Naive thymus-derived CD4-positive, alpha-beta T cell (primary cell): ENCODE measurements at regions of chr6 and their contacts with region 1.

Region 1: DNA sequence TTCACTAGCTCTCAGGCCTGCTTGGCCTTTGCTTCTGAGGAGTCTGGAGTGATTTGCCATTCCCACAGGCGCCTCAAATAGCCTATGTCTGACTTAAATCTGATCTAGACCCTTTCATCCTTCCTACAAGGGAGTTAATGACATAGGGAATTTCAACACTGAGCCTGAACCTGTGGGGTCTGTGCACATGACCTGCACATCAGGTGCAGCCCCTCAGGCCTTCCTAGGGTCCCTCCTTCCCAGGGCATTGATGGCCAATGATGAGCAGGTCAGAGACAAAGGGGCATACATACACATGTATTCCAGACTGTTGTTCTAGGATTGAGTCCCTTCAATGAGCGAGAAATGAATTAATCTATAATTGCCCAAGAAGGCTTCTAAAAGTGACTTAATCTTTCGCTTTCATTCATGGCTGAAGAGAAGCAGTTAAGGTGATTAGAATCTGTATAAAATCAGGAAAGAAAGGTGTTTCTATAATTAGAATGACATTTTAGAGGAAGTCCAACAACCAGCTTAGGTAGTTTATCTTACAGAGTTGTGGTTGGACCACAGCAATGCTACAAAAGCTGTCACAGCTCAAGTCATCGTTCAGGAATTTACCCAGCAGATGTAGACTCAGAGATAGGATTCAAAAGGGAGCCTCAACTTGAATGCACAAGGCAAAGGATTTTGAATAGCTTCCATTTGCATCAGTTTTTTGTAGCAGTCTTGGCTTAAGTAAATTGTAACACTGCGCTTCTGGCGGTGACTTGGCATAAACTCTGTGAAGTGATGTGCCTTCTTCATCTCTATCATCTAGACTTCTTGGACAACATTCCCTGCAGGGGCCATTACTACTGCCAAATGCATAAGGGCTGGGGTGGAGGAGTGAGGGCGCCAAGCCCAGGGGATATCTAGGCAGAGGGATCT is 27.0 kb upstream of the TBC1D7 start:
- DNase-seq: peak in 8 of 9 donors; percentile 10 to 42 (median 30)
- ATAC-seq: peak; percentile 75
- H3K4me3 ChIP-seq: peak overlapping the region; percentile 22
- H3K4me3 Mint-ChIP-seq: peak overlapping the region; percentile 78 to 91 (median 80)
- H3K27ac ChIP-seq: peak overlapping the region; percentile 46
- H3K27ac Mint-ChIP-seq: peak overlapping the region; percentile 71 to 98 (median 85)
- H3K4me1 ChIP-seq: peaks cover 27 to 32% of the 10 kb centered on the region in 2 donors
- H3K4me1 Mint-ChIP-seq: peaks cover 33 to 56% (median 46%) of the 10 kb centered on the region in 7 donors
- H3K27me3 ChIP-seq: no peaks in the 10 kb centered on the region
- H3K27me3 Mint-ChIP-seq: no peaks in the 10 kb centered on the region

Region 2: DNA sequence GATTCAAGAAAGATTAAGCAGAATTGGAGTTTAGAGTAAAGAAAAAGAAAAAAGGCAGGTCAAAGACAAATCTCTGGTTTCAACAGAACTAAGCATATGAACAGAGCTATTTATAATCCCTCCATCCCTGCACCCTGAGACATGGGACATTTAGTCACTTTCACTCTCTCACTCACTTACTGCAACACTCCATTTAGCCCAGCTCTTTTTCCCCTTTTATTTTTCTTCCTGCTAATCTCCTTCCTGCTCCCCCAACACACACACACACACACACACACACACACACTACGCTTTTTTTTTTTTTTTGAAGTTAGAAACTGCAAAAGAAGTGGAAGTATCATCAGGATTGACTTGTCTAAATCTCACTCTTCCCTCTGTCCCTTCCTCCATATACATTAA is 18.2 kb after region 1 on chr6:
- CTCF ChIA-PET with region 1: no interaction called
- POLR2A ChIA-PET with region 1: no interaction called
- intact Hi-C with region 1: loop called in 1 of 2 experiments (anchors 1 kb)
- DNase-seq: no peak
- ATAC-seq: no peak
- H3K4me3 ChIP-seq: no peak overlapping the region
- H3K4me3 Mint-ChIP-seq: no peak overlapping the region
- H3K27ac ChIP-seq: no peak overlapping the region
- H3K27ac Mint-ChIP-seq: no peak overlapping the region
- H3K4me1 ChIP-seq: peaks cover 0 to 9% of the 10 kb centered on the region in 2 donors
- H3K4me1 Mint-ChIP-seq: peaks cover 0 to 24% (median 2%) of the 10 kb centered on the region in 7 donors
- H3K27me3 ChIP-seq: no peaks in the 10 kb centered on the region
- H3K27me3 Mint-ChIP-seq: no peaks in the 10 kb centered on the region

Region 3: GRCh38 chr6:13383328-13384163 is 28.2 kb after region 1 on chr6:
- CTCF ChIA-PET with region 1: no interaction called
- POLR2A ChIA-PET with region 1: no interaction called
- intact Hi-C with region 1: loop called in 1 of 2 experiments (anchors 2 kb)
- DNase-seq: no peak
- ATAC-seq: peak; percentile 93
- H3K4me3 ChIP-seq: no peak overlapping the region
- H3K4me3 Mint-ChIP-seq: peak overlapping the region in 1 of 10 donors; percentile 23
- H3K27ac ChIP-seq: no peak overlapping the region
- H3K27ac Mint-ChIP-seq: peak overlapping the region in 2 of 9 donors; percentile 31 to 58
- H3K4me1 ChIP-seq: peaks cover 0 to 8% of the 10 kb centered on the region in 2 donors
- H3K4me1 Mint-ChIP-seq: peaks cover 0 to 30% (median 0%) of the 10 kb centered on the region in 7 donors
- H3K27me3 ChIP-seq: no peaks in the 10 kb centered on the region
- H3K27me3 Mint-ChIP-seq: no peaks in the 10 kb centered on the region